Heart right ventricle (tissue), 16 donors: ENCODE measurements at regions of chr1 and their contacts with region 1.

Region 1: GRCh38 chr1:119046785-119047438 is 58.8 kb upstream of the TBX15 start:
- DNase-seq: no peak
- ATAC-seq: peak in 7 of 8 donors; percentile 53 to 76 (median 57)
- H3K4me3 ChIP-seq: peak overlapping the region in 3 of 10 donors; percentile 6 to 10 (median 8)
- H3K27ac ChIP-seq: peak overlapping the region; percentile 0 to 73 (median 38)
- H3K4me1 ChIP-seq: peaks cover 0 to 26% (median 5%) of the 10 kb centered on the region in 9 donors
- H3K27me3 ChIP-seq: no peaks in the 10 kb centered on the region
- CTCF ChIP-seq: no peak

Region 2: GRCh38 chr1:119139857-119140176 is 92.9 kb after region 1 on chr1:
- intact Hi-C with region 1: loop called in 1 of 10 experiments (anchors 5 kb)
- DNase-seq: no peak
- ATAC-seq: peak in 7 of 8 donors; percentile 31 to 53 (median 39)
- H3K4me3 ChIP-seq: peak overlapping the region; percentile 44 to 70 (median 62)
- H3K27ac ChIP-seq: peak overlapping the region; percentile 90 to 99 (median 94)
- H3K4me1 ChIP-seq: peaks cover 0 to 50% (median 29%) of the 10 kb centered on the region in 9 donors
- H3K27me3 ChIP-seq: no peaks in the 10 kb centered on the region
- CTCF ChIP-seq: peak in 1 of 9 donors; percentile 17